Naive thymus-derived CD4-positive, alpha-beta T cell (primary cell): ENCODE measurements at regions of chr10 and their contacts with region 1.

Region 1: DNA sequence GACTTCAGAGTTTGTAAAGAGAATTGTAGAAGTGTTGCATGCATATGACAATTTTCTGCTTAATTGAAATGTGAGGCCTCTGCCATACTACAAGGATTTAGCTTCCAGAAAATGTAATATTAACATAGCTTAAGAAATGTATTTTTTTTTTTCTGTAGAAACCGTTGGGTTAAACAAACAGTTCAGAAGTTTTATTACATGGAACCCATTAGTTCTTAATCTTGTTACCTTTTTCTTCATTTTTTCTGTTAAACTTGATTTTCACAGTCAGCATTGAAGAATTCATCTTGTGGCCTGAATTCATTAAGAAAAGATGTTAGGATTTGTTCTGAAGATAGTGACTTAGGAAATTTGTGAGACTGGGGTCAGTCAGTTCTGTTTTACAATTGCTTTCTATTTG is 4.9 kb downstream of the PTEN start:
- DNase-seq: no peak
- ATAC-seq: no peak
- H3K4me3 ChIP-seq: peak overlapping the region; percentile 11
- H3K4me3 Mint-ChIP-seq: peak overlapping the region; percentile 46 to 98 (median 83)
- H3K27ac ChIP-seq: peak overlapping the region; percentile 22
- H3K27ac Mint-ChIP-seq: peak overlapping the region in 8 of 9 donors; percentile 7 to 70 (median 44)
- H3K4me1 ChIP-seq: peaks cover 14 to 27% of the 10 kb centered on the region in 2 donors
- H3K4me1 Mint-ChIP-seq: peaks cover 44 to 73% (median 64%) of the 10 kb centered on the region in 7 donors
- H3K27me3 ChIP-seq: no peaks in the 10 kb centered on the region
- H3K27me3 Mint-ChIP-seq: no peaks in the 10 kb centered on the region

Region 2: GRCh38 chr10:87878664-87879459 is 10.6 kb after region 1 on chr10:
- CTCF ChIA-PET with region 1: interaction called, 3 read pairs
- POLR2A ChIA-PET with region 1: interaction called, 22 read pairs
- intact Hi-C with region 1: loop called in 1 of 2 experiments (anchors 1 kb)
- DNase-seq: no peak
- ATAC-seq: peak; percentile 32
- H3K4me3 ChIP-seq: no peak overlapping the region
- H3K4me3 Mint-ChIP-seq: peak overlapping the region in 8 of 10 donors; percentile 1 to 58 (median 16)
- H3K27ac ChIP-seq: no peak overlapping the region
- H3K27ac Mint-ChIP-seq: peak overlapping the region in 6 of 9 donors; percentile 5 to 51 (median 10)
- H3K4me1 ChIP-seq: peaks cover 11 to 14% of the 10 kb centered on the region in 2 donors
- H3K4me1 Mint-ChIP-seq: peaks cover 35 to 91% (median 75%) of the 10 kb centered on the region in 7 donors
- H3K27me3 ChIP-seq: no peaks in the 10 kb centered on the region
- H3K27me3 Mint-ChIP-seq: no peaks in the 10 kb centered on the region